GM13976 (cell line): ENCODE measurements at regions of chr7 and their contacts with region 1.

Region 1: DNA sequence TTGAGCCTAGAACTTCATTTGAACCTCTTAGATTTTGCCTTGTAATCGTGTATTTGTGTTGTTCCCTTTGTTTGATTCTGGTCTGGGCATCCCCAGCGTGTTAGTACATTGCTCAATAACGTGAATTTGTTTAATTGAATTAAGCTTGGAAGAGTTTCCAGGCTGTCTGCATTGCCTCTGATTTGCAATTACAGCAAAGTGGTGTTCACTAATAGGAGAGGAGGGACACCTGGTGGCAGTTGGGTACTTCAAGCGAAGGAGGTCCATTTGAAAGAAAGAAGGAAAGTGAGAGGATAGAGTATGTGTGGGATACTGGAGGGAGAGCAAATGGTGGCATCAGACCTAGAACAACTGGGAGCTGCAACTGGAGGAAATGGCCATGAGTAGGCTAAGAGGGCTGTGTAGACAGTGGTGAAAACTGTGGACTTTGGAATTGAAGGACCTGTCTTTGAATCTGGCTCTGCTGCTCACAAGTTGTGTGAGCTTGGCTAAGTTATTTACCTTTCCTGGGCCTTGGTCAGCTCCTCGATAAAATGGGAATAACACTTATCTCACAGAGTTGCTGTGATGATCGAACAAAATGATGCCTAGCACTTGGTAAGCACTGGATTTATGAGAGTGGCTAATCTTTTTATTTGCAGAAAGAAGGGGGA is 15.1 kb downstream of the LSMEM1 start:
- DNase-seq: no peak
- CTCF ChIP-seq: peak; percentile 58

Region 2: GRCh38 chr7:111752022-111752582 is 743.8 kb before region 1 on chr7:
- in situ Hi-C with region 1: loop called (anchors 25 kb)
- DNase-seq: peak; percentile 60
- CTCF ChIP-seq: peak; percentile 81

Region 3: DNA sequence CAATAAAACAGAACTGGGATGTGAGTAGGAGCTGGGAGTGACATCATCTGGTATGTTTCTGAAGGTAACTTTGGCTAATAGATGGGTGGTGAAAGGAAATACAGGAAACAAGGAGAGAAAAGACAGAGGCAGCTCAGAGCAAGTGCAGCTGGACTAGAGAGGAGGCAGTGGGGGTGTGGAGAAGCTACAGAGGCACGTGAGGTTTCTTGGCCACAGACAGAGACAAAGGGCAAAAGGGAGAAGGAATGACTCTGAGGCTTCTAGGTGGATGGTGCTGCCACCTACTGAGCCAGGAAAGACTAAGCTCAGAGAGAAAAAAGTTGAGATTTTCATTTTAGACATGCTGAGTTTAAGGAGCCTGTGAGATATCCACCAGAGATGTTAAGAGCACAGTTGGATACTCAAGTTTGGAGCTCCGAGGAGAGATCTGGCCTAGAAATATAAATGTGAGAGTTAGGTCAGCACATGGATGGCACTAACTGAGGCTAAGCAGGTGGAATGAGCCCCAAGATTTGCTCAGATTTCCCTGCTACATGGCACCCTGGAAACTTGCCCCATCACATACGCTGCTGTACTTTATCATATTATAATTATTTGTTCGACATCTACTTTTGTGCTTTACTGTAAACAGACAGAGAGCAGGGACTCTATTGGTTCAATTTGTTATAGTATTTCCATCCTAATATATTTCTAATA is 640.6 kb before region 1 on chr7:
- in situ Hi-C with region 1: no loop called
- DNase-seq: peak; percentile 38
- CTCF ChIP-seq: peak; percentile 42

Region 4: DNA sequence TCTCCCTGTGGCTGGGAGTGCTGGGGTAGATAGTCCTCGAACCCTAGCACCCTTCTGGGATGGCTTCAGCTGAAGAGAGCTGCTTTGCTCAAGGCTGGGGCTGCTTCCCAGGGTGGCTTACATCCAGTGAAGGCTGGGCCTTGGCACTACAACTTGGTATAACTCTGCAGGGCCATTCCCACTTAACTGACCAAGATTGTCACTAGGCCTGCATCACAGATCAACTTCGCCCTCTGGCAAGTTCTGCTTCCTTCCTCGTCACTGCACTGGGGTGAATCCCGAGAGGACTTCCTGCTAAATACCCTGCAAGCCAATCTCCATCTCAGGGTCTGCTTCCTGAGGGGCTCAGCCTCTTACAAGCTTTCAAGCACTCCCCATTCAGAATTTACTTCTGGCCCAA is 484.9 kb before region 1 on chr7:
- in situ Hi-C with region 1: no loop called
- DNase-seq: no peak
- CTCF ChIP-seq: no peak